ENCODE measurements at regions of chr14 and their contacts with region 1.

Region 1: DNA sequence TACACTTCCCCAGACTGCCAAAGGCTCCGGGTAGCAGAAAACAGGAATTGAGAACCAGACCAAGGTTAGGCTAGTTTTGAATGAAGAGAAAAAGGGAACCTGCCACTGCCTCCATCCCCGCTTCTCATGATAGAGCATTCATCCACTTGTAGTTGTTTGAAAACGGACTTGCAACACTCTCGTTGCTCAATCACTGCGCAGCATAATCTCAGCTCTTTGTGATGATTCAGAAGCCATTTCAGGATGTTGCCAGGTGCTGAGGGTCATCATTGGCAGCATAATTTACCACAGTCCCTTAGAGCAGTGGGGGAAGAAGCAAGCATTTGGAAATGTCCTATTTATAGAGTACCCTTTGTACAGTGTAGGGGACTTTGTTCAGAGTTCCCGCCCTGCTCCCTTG is 25.6 kb downstream of the KCNK13 start:
- DNase-seq: peak; percentile 63 to 72
- H3K4me3 ChIP-seq: no peak overlapping the region
- H3K27ac ChIP-seq: no peak overlapping the region
- H3K4me1 ChIP-seq: peaks cover 0 to 7% (median 5%) of the 10 kb centered on the region in 4 donors
- H3K27me3 ChIP-seq: no peaks in the 10 kb centered on the region
- CTCF ChIP-seq: no peak

Region 2: GRCh38 chr14:90056826-90057225 is 30.6 kb before region 1 on chr14:
- intact Hi-C with region 1: loop called (anchors 2 kb)
- DNase-seq: no peak
- H3K4me3 ChIP-seq: no peak overlapping the region
- H3K27ac ChIP-seq: no peak overlapping the region
- H3K4me1 ChIP-seq: peaks cover 0 to 19% (median 19%) of the 10 kb centered on the region in 4 donors
- H3K27me3 ChIP-seq: peaks cover 0 to 43% of the 10 kb centered on the region in 2 donors
- CTCF ChIP-seq: no peak

Region 3: DNA sequence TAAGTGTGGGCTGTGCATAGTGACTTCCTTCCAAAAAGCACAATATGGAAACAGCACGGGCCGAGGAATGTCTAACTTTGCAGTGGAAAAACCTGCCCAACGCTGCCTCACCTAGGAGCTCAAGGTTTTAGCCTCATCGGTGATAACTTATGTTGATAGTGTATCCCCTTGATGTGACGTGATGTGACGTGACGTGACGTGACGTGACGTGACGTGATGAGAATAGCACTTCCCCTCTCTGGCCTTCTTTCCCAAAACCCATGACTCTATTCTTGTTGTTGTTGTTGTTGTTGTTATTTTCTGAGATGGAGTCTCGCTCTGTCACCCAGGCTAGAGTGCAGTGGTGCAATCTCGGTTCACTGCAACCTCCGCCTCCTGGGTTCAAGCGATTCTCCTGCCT is 38.8 kb after region 1 on chr14:
- intact Hi-C with region 1: no loop called
- DNase-seq: no peak
- H3K4me3 ChIP-seq: no peak overlapping the region
- H3K27ac ChIP-seq: no peak overlapping the region
- H3K4me1 ChIP-seq: no peaks in the 10 kb centered on the region
- H3K27me3 ChIP-seq: peaks cover 0 to 2% of the 10 kb centered on the region in 2 donors
- CTCF ChIP-seq: no peak